Ovary (tissue), 10 donors: ENCODE measurements at regions of chr17 and their contacts with region 1.

Region 1: GRCh38 chr17:27367121-27367991 is 73.4 kb downstream of the WSB1 start:
- DNase-seq: no peak
- H3K4me3 ChIP-seq: no peak overlapping the region
- H3K27ac ChIP-seq: no peak overlapping the region
- H3K4me1 ChIP-seq: no peaks in the 10 kb centered on the region
- H3K27me3 ChIP-seq: no peaks in the 10 kb centered on the region
- CTCF ChIP-seq: no peak
- EP300 ChIP-seq: no peak
- POLR2A ChIP-seq: no peak

Region 2: DNA sequence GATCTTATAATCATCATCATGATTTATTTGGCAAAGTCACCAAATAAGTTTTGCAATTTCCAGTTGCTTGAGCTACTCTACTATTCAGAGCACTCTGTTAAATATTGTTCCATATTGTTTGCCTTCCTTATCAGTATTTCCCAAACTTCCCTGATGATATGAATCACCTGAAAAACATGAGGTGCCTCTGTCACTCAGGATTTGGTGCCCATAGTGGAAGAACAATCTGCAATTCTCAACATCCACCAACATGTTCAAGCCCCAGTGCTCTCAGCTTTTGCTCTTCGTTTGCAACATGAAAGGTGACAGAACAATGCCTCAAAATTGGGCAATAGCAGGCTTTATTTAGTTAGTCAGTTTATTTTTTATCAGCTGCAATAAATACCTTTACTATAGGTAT is 102.0 kb before region 1 on chr17:
- intact Hi-C with region 1: no loop called
- DNase-seq: no peak
- H3K4me3 ChIP-seq: no peak overlapping the region
- H3K27ac ChIP-seq: no peak overlapping the region
- H3K4me1 ChIP-seq: no peaks in the 10 kb centered on the region
- H3K27me3 ChIP-seq: no peaks in the 10 kb centered on the region
- CTCF ChIP-seq: no peak
- EP300 ChIP-seq: no peak
- POLR2A ChIP-seq: no peak

Region 3: DNA sequence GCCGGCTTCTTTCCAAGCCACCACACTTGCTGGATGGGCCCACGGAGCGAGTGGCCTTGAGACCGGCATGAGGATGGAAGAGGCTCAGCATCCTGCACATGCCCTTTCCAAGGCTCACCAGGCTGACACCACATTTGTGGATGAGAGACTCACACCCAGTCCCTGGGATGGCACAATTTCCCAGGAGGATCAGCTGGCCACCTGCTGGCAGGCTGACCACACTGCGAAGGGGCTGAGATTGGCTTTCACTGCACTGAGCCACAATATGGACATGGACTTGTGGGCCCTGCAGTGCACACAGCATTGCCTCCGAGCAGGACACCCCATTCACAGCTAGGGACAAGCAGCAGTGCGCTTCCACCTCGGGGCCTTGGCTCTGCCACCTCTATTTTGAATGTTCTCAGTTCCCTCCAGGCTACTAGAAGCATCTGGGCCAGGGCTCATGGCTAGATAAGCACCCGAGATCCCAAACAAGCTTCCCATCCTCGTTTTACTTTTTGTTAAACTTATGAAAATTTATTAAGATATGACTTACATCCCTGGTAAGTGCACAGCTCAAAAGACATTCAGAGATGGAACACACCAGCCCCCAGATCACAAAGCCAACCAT is 63.6 kb after region 1 on chr17:
- intact Hi-C with region 1: loop called in 1 of 4 experiments (anchors 5 kb)
- DNase-seq: no peak
- H3K4me3 ChIP-seq: no peak overlapping the region
- H3K27ac ChIP-seq: no peak overlapping the region
- H3K4me1 ChIP-seq: no peaks in the 10 kb centered on the region
- H3K27me3 ChIP-seq: no peaks in the 10 kb centered on the region
- CTCF ChIP-seq: peak in 1 of 3 donors; percentile 17
- EP300 ChIP-seq: no peak
- POLR2A ChIP-seq: no peak

Region 4: GRCh38 chr17:27446569-27447301 is 79.4 kb after region 1 on chr17:
- intact Hi-C with region 1: loop called in 1 of 4 experiments (anchors 10 kb)
- DNase-seq: no peak
- H3K4me3 ChIP-seq: no peak overlapping the region
- H3K27ac ChIP-seq: no peak overlapping the region
- H3K4me1 ChIP-seq: no peaks in the 10 kb centered on the region
- H3K27me3 ChIP-seq: no peaks in the 10 kb centered on the region
- CTCF ChIP-seq: no peak
- EP300 ChIP-seq: no peak
- POLR2A ChIP-seq: no peak